ENCODE measurements at regions of chr17 and their contacts with region 1.

Region 1: GRCh38 chr17:28592260-28592659 is 6.6 kb downstream of the SPAG5 start:
- DNase-seq: no peak
- ATAC-seq: no peak
- H3K4me3 ChIP-seq: no peak overlapping the region
- H3K4me3 Mint-ChIP-seq: no peak overlapping the region
- H3K27ac ChIP-seq: no peak overlapping the region
- H3K27ac Mint-ChIP-seq: no peak overlapping the region
- H3K4me1 ChIP-seq: no peaks in the 10 kb centered on the region
- H3K4me1 Mint-ChIP-seq: no peaks in the 10 kb centered on the region
- H3K27me3 ChIP-seq: no peaks in the 10 kb centered on the region
- H3K27me3 Mint-ChIP-seq: no peaks in the 10 kb centered on the region
- CTCF ChIP-seq: no peak

Region 2: GRCh38 chr17:28576758-28577465 is 15.3 kb before region 1 on chr17 and contains the start of gene ALDOC:
- CTCF ChIA-PET with region 1: interaction called, 4 read pairs
- POLR2A ChIA-PET with region 1: interaction called, 12 read pairs
- intact Hi-C with region 1: no loop called
- DNase-seq: peak; percentile 95 to 100 (median 98)
- ATAC-seq: peak; percentile 97
- H3K4me3 ChIP-seq: peak within 1 kb of the TSS; percentile 46
- H3K4me3 Mint-ChIP-seq: peak within 1 kb of the TSS; percentile 87
- H3K27ac ChIP-seq: peak within 1 kb of the TSS in 1 of 2 donors; percentile 41
- H3K27ac Mint-ChIP-seq: peak within 1 kb of the TSS; percentile 77
- H3K4me1 ChIP-seq: peaks cover 36% of the 10 kb centered on the region
- H3K4me1 Mint-ChIP-seq: peaks cover 31% of the 10 kb centered on the region
- H3K27me3 ChIP-seq: no peaks in the 10 kb centered on the region
- H3K27me3 Mint-ChIP-seq: no peaks in the 10 kb centered on the region
- CTCF ChIP-seq: no peak
- total RNA-seq, gene ALDOC: 21.8 to 22.7 TPM